ENCODE measurements at regions of chr14 and their contacts with region 1.

Region 1: GRCh38 chr14:52824507-52824906 is 33.1 kb upstream of the GNPNAT1 start:
- DNase-seq: no peak
- H3K4me3 ChIP-seq: no peak overlapping the region
- H3K27ac ChIP-seq: no peak overlapping the region
- H3K4me1 ChIP-seq: peaks cover 0 to 25% (median 6%) of the 10 kb centered on the region in 4 donors
- H3K27me3 ChIP-seq: no peaks in the 10 kb centered on the region
- CTCF ChIP-seq: no peak
- EP300 ChIP-seq: no peak
- POLR2A ChIP-seq: no peak

Region 2: GRCh38 chr14:52961060-52961639 is 136.6 kb after region 1 on chr14:
- intact Hi-C with region 1: loop called (anchors 2 kb)
- DNase-seq: no peak
- H3K4me3 ChIP-seq: no peak overlapping the region
- H3K27ac ChIP-seq: peak overlapping the region; percentile 53 to 68 (median 64)
- H3K4me1 ChIP-seq: peaks cover 8 to 22% (median 19%) of the 10 kb centered on the region in 4 donors
- H3K27me3 ChIP-seq: no peaks in the 10 kb centered on the region
- CTCF ChIP-seq: peak; percentile 61 to 80 (median 77)
- EP300 ChIP-seq: no peak
- POLR2A ChIP-seq: no peak

Region 3: DNA sequence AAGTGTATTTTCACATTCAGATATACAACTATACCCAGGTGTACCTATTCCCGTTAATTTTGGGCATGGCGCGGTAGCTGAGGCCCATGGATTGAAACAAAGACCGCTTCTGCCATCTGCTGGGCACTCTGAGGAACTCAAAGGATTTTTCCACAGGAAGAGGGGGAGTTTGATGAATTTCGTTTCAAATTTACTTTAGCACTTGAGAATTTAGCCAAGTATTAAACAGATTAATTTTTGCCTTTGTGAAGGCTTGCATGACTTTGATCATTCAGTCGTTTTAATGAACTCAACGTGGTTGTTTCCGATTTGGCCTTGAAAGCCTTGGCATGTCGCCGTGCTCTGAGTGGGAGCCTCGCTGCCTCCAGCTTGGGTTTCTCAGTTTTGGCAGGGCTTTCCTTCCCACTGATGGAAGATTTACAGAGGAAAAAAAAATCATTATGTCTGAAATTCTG is 481.8 kb after region 1 on chr14:
- intact Hi-C with region 1: loop called (anchors 10 kb)
- DNase-seq: no peak
- H3K4me3 ChIP-seq: peak overlapping the region; percentile 39 to 64 (median 51)
- H3K27ac ChIP-seq: peak overlapping the region; percentile 65 to 74 (median 72)
- H3K4me1 ChIP-seq: peaks cover 7 to 31% (median 29%) of the 10 kb centered on the region in 4 donors
- H3K27me3 ChIP-seq: no peaks in the 10 kb centered on the region
- CTCF ChIP-seq: peak; percentile 81 to 86 (median 81)
- EP300 ChIP-seq: no peak
- POLR2A ChIP-seq: no peak

Measured in esophagus muscularis mucosa (tissue), 4 donors.